Activated CD8-positive, alpha-beta T cell treated with anti-CD3 and anti-CD28 coated beads, Interleukin-2, amount 10 ng/mL, durations not matched to agents 7 days and 5 days (primary cell): ENCODE measurements at regions of chr1 and their contacts with region 1.

Region 1: GRCh38 chr1:12619792-12620487 is 1.9 kb upstream of the DHRS3 start:
- DNase-seq: peak; percentile 86
- ATAC-seq: peak; percentile 41
- H3K4me3 Mint-ChIP-seq: peak overlapping the region; percentile 99
- H3K27ac Mint-ChIP-seq: peak overlapping the region; percentile 83
- H3K4me1 Mint-ChIP-seq: peaks cover 46% of the 10 kb centered on the region
- H3K27me3 Mint-ChIP-seq: no peaks in the 10 kb centered on the region

Region 2: GRCh38 chr1:12275369-12275768 is 344.6 kb before region 1 on chr1:
- CTCF ChIA-PET with region 1: interaction called, 52 read pairs
- POLR2A ChIA-PET with region 1: interaction called, 3 read pairs
- DNase-seq: peak; percentile 58
- ATAC-seq: no peak
- H3K4me3 Mint-ChIP-seq: no peak overlapping the region
- H3K27ac Mint-ChIP-seq: no peak overlapping the region
- H3K4me1 Mint-ChIP-seq: no peaks in the 10 kb centered on the region
- H3K27me3 Mint-ChIP-seq: no peaks in the 10 kb centered on the region

Region 3: GRCh38 chr1:12344596-12345349 is 275.2 kb before region 1 on chr1:
- CTCF ChIA-PET with region 1: interaction called, 10 read pairs
- POLR2A ChIA-PET with region 1: interaction called, 3 read pairs
- DNase-seq: no peak
- ATAC-seq: peak; percentile 21
- H3K4me3 Mint-ChIP-seq: peak overlapping the region; percentile 61
- H3K27ac Mint-ChIP-seq: peak overlapping the region; percentile 91
- H3K4me1 Mint-ChIP-seq: peaks cover 60% of the 10 kb centered on the region
- H3K27me3 Mint-ChIP-seq: no peaks in the 10 kb centered on the region

Region 4: DNA sequence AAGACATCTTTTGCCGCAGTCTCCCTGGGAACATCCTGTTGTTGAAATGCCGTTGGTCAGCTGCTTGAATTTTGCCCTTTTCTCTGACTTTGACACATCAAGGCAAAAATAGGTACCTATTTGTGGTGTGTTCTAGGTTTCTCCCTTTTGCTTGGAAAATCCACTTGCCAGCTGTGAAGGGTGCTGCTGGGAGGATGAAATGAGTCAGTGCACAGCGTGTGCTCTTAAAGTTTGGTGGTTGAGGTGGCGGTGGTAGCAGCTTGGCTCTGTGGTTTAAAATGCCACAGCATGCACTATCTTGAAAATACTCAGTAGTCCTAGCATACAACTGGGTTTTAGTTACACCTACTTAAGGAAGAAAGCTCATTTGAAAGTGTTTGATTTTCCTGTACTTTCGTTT is 185.8 kb before region 1 on chr1:
- CTCF ChIA-PET with region 1: interaction called, 17 read pairs
- POLR2A ChIA-PET with region 1: interaction called, 55 read pairs
- DNase-seq: peak; percentile 88
- ATAC-seq: peak; percentile 63
- H3K4me3 Mint-ChIP-seq: peak overlapping the region; percentile 56
- H3K27ac Mint-ChIP-seq: peak overlapping the region; percentile 89
- H3K4me1 Mint-ChIP-seq: peaks cover 90% of the 10 kb centered on the region
- H3K27me3 Mint-ChIP-seq: no peaks in the 10 kb centered on the region

Region 5: DNA sequence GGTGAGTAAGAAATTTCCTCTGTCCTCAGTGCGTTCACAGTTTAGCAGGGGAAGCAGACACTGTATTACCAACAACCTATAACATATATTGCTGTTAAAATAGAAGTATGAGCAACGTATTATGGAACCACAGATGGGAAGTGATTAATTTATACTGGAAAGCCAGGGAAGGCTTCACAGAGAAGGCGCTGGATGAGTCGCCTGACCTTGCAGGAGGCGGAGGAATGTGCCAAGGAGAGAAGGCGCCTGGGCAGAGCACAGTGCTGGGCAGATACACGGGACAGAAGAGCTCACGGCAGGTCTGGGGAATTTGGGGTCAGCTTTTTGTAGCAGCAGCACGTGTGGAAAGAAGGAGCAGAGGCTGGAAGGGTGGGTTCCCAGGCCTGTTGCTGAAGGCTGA is 118.3 kb before region 1 on chr1:
- CTCF ChIA-PET with region 1: no interaction called
- POLR2A ChIA-PET with region 1: no interaction called
- DNase-seq: no peak
- ATAC-seq: no peak
- H3K4me3 Mint-ChIP-seq: no peak overlapping the region
- H3K27ac Mint-ChIP-seq: peak overlapping the region; percentile 14
- H3K4me1 Mint-ChIP-seq: peaks cover 28% of the 10 kb centered on the region
- H3K27me3 Mint-ChIP-seq: no peaks in the 10 kb centered on the region

Region 6: DNA sequence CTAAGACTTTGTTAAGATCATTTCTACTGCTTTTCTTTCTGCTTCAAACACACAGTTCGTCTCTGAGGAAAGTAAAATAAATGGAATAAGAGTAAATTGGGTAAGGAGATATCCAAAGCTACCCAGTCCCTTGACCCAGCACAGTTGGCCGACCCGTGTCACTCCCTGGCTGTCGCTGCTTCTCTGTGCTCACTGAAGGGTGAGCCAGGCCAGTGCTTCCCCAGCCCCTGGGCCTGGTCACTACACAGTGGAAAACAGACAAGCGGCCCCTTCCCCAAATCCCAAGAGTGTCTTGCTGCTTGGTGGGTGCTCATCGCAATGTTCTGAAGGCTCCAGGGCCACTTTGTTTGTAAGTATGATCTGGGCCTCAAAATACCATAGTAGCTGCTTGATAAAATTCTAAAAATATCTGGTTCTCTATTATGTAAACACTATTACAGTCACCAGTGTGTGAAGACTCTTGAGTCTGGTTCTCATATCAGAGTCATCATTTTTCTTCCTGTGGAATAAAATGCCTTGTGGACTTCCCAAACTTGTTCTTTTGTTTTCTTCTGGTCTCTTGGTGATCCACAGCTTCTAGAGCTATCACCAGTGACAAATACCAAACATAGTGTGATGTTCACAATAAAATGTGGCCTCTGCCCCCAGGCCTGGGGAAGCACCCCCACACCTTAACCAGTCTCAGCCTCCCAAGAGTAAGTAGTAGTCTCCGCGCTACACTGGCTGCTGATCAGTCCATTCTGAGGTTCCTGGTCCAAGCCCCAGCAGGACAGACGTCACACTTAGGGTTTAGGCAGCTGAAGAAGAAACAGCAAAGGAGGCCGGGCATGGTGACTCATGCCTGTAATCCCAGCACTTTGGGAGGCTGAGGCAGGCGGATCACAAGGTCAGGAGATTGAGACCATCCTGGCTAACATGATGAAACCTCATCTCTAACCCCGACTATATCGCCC is 108.1 kb before region 1 on chr1:
- CTCF ChIA-PET with region 1: interaction called, 16 read pairs
- POLR2A ChIA-PET with region 1: interaction called, 27 read pairs
- DNase-seq: no peak
- ATAC-seq: no peak
- H3K4me3 Mint-ChIP-seq: peak overlapping the region; percentile 80
- H3K27ac Mint-ChIP-seq: peak overlapping the region; percentile 100
- H3K4me1 Mint-ChIP-seq: peaks cover 53% of the 10 kb centered on the region
- H3K27me3 Mint-ChIP-seq: no peaks in the 10 kb centered on the region

Region 7: GRCh38 chr1:12630946-12631530 is 11.1 kb after region 1 on chr1:
- CTCF ChIA-PET with region 1: interaction called, 22 read pairs
- POLR2A ChIA-PET with region 1: interaction called, 5 read pairs
- DNase-seq: no peak
- ATAC-seq: no peak
- H3K4me3 Mint-ChIP-seq: no peak overlapping the region
- H3K27ac Mint-ChIP-seq: no peak overlapping the region
- H3K4me1 Mint-ChIP-seq: peaks cover 29% of the 10 kb centered on the region
- H3K27me3 Mint-ChIP-seq: peaks cover 5% of the 10 kb centered on the region

Region 8: DNA sequence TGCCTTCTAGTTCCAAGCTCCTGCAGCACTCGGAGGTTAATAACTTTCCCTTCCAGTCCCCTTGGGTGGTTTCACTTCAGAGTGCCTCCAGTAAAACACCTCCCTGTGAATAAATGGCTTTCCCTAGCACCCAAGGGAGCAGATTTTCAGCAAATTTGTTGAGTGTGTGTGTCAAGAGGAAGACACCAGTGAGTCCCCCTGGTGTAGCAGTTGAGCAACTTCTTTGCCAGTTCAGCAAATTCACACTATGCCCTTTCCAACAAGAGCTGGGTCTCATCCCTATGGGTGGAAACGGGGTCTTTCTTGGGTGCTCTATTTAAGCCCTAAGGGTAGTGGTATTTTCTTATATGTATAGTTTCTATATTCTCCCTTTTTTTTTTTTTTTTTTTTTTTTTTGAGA is 23.1 kb after region 1 on chr1:
- CTCF ChIA-PET with region 1: no interaction called
- POLR2A ChIA-PET with region 1: no interaction called
- DNase-seq: no peak
- ATAC-seq: no peak
- H3K4me3 Mint-ChIP-seq: no peak overlapping the region
- H3K27ac Mint-ChIP-seq: no peak overlapping the region
- H3K4me1 Mint-ChIP-seq: no peaks in the 10 kb centered on the region
- H3K27me3 Mint-ChIP-seq: peaks cover 2% of the 10 kb centered on the region